ENCODE measurements at regions of chr15 and their contacts with region 1.

Region 1: GRCh38 chr15:82046666-82047452 is 1.0 kb upstream of the MEX3B start:
- DNase-seq: peak; percentile 45 to 93
- H3K4me3 ChIP-seq: peak overlapping the region; percentile 86 to 95
- H3K27ac ChIP-seq: peak overlapping the region; percentile 83 to 88
- H3K4me1 ChIP-seq: peaks cover 0 to 6% of the 10 kb centered on the region in 2 donors
- H3K27me3 ChIP-seq: no peaks in the 10 kb centered on the region
- CTCF ChIP-seq: peak; percentile 68 to 72 (median 71)

Region 2: DNA sequence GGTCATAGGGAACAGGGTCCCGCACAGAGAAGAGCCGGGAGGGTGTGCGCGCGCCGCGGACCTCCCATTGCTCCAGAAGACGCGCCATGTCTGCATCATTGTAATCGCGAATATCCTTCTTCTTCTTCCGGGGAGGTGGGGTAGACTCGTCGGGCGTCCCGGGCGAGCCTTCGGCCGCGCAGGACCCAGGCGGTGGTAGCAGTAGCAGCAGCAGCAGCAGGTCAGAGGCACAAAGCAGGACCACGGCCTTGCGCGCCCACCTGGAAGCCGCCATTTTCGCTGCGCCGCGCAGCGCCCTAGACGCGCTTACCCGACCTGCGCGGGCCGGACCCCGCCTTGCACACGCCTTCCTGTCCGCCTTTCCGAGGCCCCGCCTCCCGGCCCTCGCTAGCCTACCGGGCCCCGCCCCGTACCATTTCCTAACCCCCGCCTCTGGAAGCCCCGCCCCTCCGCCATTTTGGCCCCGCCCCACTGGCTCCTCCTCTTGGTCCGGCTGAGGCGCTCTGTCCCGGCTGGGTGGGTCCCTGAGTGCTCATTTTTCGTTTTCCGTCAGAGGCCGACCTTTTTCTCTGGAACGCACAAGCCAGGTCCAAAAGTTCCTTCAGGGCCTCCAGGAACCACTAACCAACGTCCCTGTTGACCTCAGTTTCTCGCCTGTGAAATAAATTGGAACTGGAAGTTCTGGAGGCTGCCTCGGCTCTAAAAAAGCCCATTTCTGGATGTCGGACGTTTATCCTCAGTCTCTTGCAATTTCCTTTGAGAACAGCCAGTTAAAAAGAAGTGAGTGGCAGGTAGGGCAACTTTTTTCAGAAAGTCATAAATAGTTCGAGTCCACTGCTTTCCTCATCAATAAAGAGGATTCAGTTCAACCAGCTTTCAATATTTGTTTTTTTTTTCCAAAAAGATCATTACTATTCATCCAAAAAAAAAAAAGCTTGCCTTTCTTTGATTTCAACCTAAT is 1057.1 kb before region 1 on chr15 and contains the start of gene MESD:
- intact Hi-C with region 1: loop called (anchors 10 kb)
- DNase-seq: peak; percentile 86 to 98
- H3K4me3 ChIP-seq: peak within 1 kb of the TSS; percentile 70 to 95
- H3K27ac ChIP-seq: peak within 1 kb of the TSS; percentile 91 to 92
- H3K4me1 ChIP-seq: peaks cover 0 to 29% of the 10 kb centered on the region in 2 donors
- H3K27me3 ChIP-seq: no peaks in the 10 kb centered on the region
- CTCF ChIP-seq: no peak
- total RNA-seq, gene MESD: 6.4 TPM

Region 3: GRCh38 chr15:81887912-81888311 is 158.9 kb before region 1 on chr15:
- intact Hi-C with region 1: loop called (anchors 5 kb)
- DNase-seq: no peak
- H3K4me3 ChIP-seq: no peak overlapping the region
- H3K27ac ChIP-seq: peak overlapping the region; percentile 26 to 51
- H3K4me1 ChIP-seq: peaks cover 3 to 17% of the 10 kb centered on the region in 2 donors
- H3K27me3 ChIP-seq: no peaks in the 10 kb centered on the region
- CTCF ChIP-seq: no peak

Region 4: DNA sequence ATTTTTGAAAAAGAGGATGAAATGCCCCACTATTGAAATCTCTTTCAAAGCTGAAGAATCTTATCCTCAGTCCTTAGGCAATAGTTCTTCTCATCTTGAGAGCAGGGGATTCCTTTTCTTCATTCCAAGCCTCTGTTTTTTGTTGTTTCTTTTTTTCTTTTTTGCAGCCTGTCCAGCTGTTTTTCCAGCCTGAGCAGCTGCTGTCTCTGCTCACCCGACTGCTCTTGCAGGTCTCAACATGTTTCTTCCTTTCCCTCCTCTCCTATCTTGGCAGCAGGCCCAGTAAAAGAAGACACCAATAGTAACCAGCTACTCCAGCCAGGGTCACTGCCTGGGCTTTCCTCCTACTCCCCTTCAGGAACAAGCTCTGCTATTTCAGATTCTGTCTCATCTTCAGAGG is 24.9 kb before region 1 on chr15:
- intact Hi-C with region 1: no loop called
- DNase-seq: no peak
- H3K4me3 ChIP-seq: no peak overlapping the region
- H3K27ac ChIP-seq: no peak overlapping the region
- H3K4me1 ChIP-seq: no peaks in the 10 kb centered on the region
- H3K27me3 ChIP-seq: no peaks in the 10 kb centered on the region
- CTCF ChIP-seq: no peak

Region 5: GRCh38 chr15:82081914-82082762 is 35.3 kb after region 1 on chr15:
- intact Hi-C with region 1: no loop called
- DNase-seq: no peak
- H3K4me3 ChIP-seq: no peak overlapping the region
- H3K27ac ChIP-seq: no peak overlapping the region
- H3K4me1 ChIP-seq: no peaks in the 10 kb centered on the region
- H3K27me3 ChIP-seq: no peaks in the 10 kb centered on the region
- CTCF ChIP-seq: no peak

Region 6: DNA sequence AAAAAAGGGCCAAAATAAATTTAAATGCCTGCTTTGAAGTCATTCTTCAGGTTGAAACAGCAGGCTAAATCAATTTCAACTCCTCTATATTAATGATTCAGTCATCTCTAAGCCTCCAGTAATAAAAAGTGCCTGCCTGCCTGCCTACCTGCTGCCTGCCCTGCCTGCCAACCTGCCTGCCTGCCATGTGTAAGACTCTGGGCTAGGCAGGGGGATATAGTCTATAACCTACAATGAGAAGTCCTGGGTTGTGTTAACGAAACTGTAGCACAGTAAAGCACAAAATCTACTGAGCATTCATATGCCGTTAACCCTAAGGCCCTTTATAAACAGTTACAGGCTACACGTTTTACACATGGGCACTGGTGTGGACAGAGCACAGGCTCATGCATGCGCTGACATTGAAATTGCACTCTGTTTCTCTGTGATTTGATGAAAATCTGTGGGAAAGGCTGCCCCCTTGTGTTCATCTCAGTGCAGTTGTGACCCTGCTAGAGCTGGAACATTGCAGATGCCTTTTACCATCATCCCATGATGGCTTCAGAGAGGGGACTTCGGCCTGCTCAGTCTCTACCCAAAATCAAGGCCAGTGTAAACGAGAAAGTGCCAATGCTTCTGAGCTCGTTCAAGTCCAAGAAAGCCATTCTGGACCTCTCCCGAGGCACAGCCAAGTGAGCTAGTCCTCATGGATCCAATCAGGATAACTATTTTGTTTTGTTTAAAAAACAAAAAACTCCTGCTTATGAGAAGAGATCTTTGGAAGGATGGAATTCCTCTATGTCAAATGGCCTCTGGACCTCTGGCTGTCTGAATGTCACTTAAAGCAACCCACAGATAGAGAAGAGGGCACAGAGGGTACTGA is 151.1 kb after region 1 on chr15:
- intact Hi-C with region 1: loop called (anchors 5 kb)
- DNase-seq: peak in 1 of 2 donors; percentile 68
- H3K4me3 ChIP-seq: no peak overlapping the region
- H3K27ac ChIP-seq: no peak overlapping the region
- H3K4me1 ChIP-seq: no peaks in the 10 kb centered on the region
- H3K27me3 ChIP-seq: no peaks in the 10 kb centered on the region
- CTCF ChIP-seq: peak; percentile 42 to 80 (median 65)

Region 7: GRCh38 chr15:82809404-82810060 is 762.7 kb after region 1 on chr15 and contains the start of gene WHAMM:
- intact Hi-C with region 1: loop called (anchors 5 kb)
- DNase-seq: peak; percentile 99
- H3K4me3 ChIP-seq: peak within 1 kb of the TSS; percentile 90 to 91
- H3K27ac ChIP-seq: peak within 1 kb of the TSS; percentile 98 to 100
- H3K4me1 ChIP-seq: peaks cover 7 to 16% of the 10 kb centered on the region in 2 donors
- H3K27me3 ChIP-seq: no peaks in the 10 kb centered on the region
- CTCF ChIP-seq: peak in 1 of 3 experiments; percentile 8
- total RNA-seq, gene WHAMM: 18.8 TPM

Measured in ascending aorta (tissue), 2 donors.